ENCODE measurements at regions of chr10 and their contacts with region 1.

Region 1: GRCh38 chr10:127243490-127244272 is 47.3 kb upstream of the INSYN2A start:
- DNase-seq: peak; percentile 46
- ATAC-seq: peak; percentile 96
- H3K4me3 ChIP-seq: no peak overlapping the region
- H3K27ac ChIP-seq: no peak overlapping the region
- H3K4me1 ChIP-seq: no peaks in the 10 kb centered on the region
- H3K27me3 ChIP-seq: no peaks in the 10 kb centered on the region
- CTCF ChIP-seq: peak; percentile 72
- EP300 ChIP-seq: no peak
- POLR2A ChIP-seq: no peak
- RAD21 ChIP-seq: peak; percentile 71; the same call in 1 of the 2 replicates

Region 2: GRCh38 chr10:127182161-127182560 is 61.5 kb before region 1 on chr10:
- CTCF ChIA-PET with region 1: no interaction called
- POLR2A ChIA-PET with region 1: no interaction called
- in situ Hi-C with region 1: no loop called
- intact Hi-C with region 1: no loop called
- DNase-seq: no peak
- ATAC-seq: no peak
- H3K4me3 ChIP-seq: no peak overlapping the region
- H3K27ac ChIP-seq: no peak overlapping the region
- H3K4me1 ChIP-seq: no peaks in the 10 kb centered on the region
- H3K27me3 ChIP-seq: no peaks in the 10 kb centered on the region
- CTCF ChIP-seq: no peak
- EP300 ChIP-seq: no peak
- POLR2A ChIP-seq: no peak
- RAD21 ChIP-seq: no peak

Region 3: GRCh38 chr10:127262606-127263005 is 18.9 kb after region 1 on chr10:
- CTCF ChIA-PET with region 1: no interaction called
- POLR2A ChIA-PET with region 1: no interaction called
- in situ Hi-C with region 1: no loop called
- intact Hi-C with region 1: no loop called
- DNase-seq: no peak
- ATAC-seq: no peak
- H3K4me3 ChIP-seq: no peak overlapping the region
- H3K27ac ChIP-seq: no peak overlapping the region
- H3K4me1 ChIP-seq: no peaks in the 10 kb centered on the region
- H3K27me3 ChIP-seq: no peaks in the 10 kb centered on the region
- CTCF ChIP-seq: no peak
- EP300 ChIP-seq: no peak
- POLR2A ChIP-seq: no peak
- RAD21 ChIP-seq: no peak

Region 4: DNA sequence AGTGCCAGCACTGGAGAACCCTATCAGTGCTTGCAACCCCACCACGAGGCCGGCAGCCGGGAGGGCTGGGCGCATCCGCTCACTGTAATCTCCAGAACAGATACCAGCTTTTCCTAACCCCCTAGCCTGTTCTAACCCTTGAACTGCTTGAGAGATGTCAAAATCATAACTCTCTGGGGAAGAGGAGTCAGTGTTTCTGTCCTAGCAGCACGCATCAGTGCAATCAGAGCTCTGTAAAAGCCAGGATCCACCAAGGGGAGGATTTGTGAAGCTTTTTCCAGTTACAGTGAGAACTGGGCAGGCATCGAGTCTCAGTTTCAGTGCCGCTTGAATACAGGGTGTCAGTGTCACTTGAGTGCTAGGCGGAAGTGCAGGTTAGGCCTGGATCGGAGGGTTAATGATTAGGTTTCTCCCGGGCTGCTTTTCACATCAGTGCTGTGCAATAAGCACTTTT is 57.2 kb after region 1 on chr10:
- CTCF ChIA-PET with region 1: no interaction called
- POLR2A ChIA-PET with region 1: interaction called, 4 read pairs
- in situ Hi-C with region 1: no loop called
- intact Hi-C with region 1: loop called (anchors 2 kb)
- DNase-seq: peak; percentile 87
- ATAC-seq: peak; percentile 98
- H3K4me3 ChIP-seq: peak overlapping the region; percentile 32 to 55 (median 44); a peak in 4 of 6 replicates
- H3K27ac ChIP-seq: peak overlapping the region; percentile 93
- H3K4me1 ChIP-seq: peaks cover 40% of the 10 kb centered on the region
- H3K27me3 ChIP-seq: no peaks in the 10 kb centered on the region
- CTCF ChIP-seq: no peak
- EP300 ChIP-seq: no peak
- POLR2A ChIP-seq: peak; percentile 55 to 76; a peak in 3 of 4 replicates
- RAD21 ChIP-seq: peak; percentile 8; the same call in 1 of the 2 replicates

Region 5: GRCh38 chr10:127354992-127355391 is 111.3 kb after region 1 on chr10:
- CTCF ChIA-PET with region 1: interaction called, 4 read pairs
- POLR2A ChIA-PET with region 1: no interaction called
- in situ Hi-C with region 1: loop called (anchors 5 kb)
- intact Hi-C with region 1: loop called (anchors 1 kb)
- DNase-seq: no peak
- ATAC-seq: no peak
- H3K4me3 ChIP-seq: no peak overlapping the region
- H3K27ac ChIP-seq: no peak overlapping the region
- H3K4me1 ChIP-seq: no peaks in the 10 kb centered on the region
- H3K27me3 ChIP-seq: no peaks in the 10 kb centered on the region
- CTCF ChIP-seq: 0 out of 2 replicates have a peak, but pooled peaks have one; percentile 11
- EP300 ChIP-seq: no peak
- POLR2A ChIP-seq: no peak
- RAD21 ChIP-seq: no peak

Region 6: GRCh38 chr10:127577376-127577775 is 333.7 kb after region 1 on chr10:
- CTCF ChIA-PET with region 1: no interaction called
- POLR2A ChIA-PET with region 1: no interaction called
- in situ Hi-C with region 1: no loop called
- intact Hi-C with region 1: loop called (anchors 5 kb)
- DNase-seq: no peak
- ATAC-seq: no peak
- H3K4me3 ChIP-seq: no peak overlapping the region
- H3K27ac ChIP-seq: no peak overlapping the region
- H3K4me1 ChIP-seq: no peaks in the 10 kb centered on the region
- H3K27me3 ChIP-seq: peaks cover 0 to 8% of the 10 kb centered on the region in 2 experiments; a peak in 2 of 5 replicates
- CTCF ChIP-seq: no peak
- EP300 ChIP-seq: no peak
- POLR2A ChIP-seq: no peak
- RAD21 ChIP-seq: no peak